ENCODE measurements at regions of chr2 and their contacts with region 1.

Region 1: GRCh38 chr2:165203689-165204559 is at the start of gene SCN3A:
- DNase-seq: no peak
- ATAC-seq: no peak
- total RNA-seq, gene SCN3A: 0.95 TPM

Region 2: DNA sequence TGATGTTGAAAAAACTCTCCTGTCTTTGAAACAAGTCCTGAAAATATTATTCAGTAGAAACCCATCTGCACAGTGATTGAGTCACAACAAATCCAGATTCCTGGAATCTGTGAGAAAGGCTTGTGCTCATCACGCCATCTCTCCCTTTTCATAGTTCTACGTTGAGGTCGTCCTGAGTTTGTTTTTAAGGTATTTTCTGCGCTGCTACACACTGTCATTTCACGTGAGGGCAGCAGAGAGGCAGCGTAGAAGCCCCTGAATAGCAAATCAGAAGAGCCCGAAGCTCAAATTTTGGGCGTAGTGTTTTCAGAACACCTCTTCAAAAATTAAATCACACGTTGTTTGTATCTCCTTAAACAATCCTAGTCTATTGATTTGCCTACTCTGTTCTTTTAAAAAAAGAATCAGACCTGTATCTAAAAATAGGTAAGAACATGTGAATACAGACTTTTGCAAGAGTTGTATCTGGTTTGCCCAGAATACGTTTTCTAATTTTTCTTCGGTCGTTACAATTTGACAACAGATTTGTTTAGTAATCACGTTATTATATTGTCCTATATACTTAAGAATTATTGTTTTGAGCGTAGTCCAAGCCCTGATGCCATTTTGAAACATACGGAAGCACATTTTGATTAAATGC is 187.0 kb before region 1 on chr2:
- intact Hi-C with region 1: loop called (anchors 2 kb)
- DNase-seq: no peak
- ATAC-seq: peak; percentile 71

Region 3: GRCh38 chr2:165087933-165088901 is 115.7 kb before region 1 on chr2:
- intact Hi-C with region 1: no loop called
- DNase-seq: no peak
- ATAC-seq: no peak

Region 4: GRCh38 chr2:165182029-165182428 is 21.9 kb before region 1 on chr2:
- intact Hi-C with region 1: loop called (anchors 1 kb)
- DNase-seq: no peak
- ATAC-seq: no peak

Measured in Right ventricle myocardium inferior (tissue), 1 donor.